ENCODE measurements at regions of chr6 and their contacts with region 1.

Region 1: DNA sequence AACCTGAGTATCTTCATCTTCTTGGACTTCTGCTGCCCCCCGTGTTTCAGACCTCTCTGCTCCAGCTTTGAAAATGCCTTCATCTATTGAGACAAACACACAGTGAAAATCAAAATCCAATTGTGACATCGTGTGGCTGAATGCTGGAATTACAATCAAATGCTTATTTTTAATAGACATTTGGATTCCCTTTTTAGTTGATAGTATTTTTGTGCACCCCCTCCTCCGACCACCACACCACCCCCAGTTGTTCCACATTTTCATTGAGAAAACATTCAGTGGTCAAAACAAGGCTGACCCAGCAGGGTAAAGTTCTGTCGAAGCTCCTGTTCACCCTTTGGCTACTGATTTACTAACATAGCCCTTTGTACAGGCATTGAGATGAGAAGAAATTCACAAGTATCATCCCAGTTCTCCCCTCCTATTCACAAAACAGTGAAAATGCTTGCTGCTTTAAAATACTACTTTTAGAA is 79.0 kb downstream of the NRSN1 start:
- DNase-seq: no peak
- H3K4me3 ChIP-seq: no peak overlapping the region
- H3K27ac ChIP-seq: no peak overlapping the region
- H3K4me1 ChIP-seq: no peaks in the 10 kb centered on the region
- H3K27me3 ChIP-seq: no peaks in the 10 kb centered on the region
- CTCF ChIP-seq: peak in 2 of 3 experiments; percentile 52 to 59; a peak in 2 of 4 replicates
- EP300 ChIP-seq: no peak
- POLR2A ChIP-seq: no peak
- RAD21 ChIP-seq: peak; percentile 86 to 90

Region 2: DNA sequence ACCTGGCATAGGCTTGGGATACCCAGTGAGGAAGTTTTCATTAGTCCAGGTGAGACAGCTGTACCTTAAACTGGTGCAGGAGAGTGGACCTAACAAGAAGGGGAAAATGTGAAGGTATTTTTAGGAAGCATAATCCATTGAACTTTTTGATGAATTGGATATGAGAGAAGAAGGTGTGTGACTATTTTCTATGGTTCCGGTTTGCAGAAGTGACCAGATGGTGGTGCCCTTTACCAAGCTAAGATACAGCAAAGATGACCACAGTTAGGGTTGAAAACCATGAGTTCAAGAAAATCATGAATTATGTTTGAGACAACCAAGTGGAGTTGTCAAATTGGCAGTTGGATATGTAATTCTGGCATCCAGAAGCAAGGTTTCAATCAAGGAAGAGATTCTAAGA is 141.0 kb before region 1 on chr6:
- CTCF ChIA-PET with region 1: interaction called, 30 read pairs
- POLR2A ChIA-PET with region 1: interaction called, 3 read pairs
- DNase-seq: no peak
- H3K4me3 ChIP-seq: no peak overlapping the region
- H3K27ac ChIP-seq: no peak overlapping the region
- H3K4me1 ChIP-seq: no peaks in the 10 kb centered on the region
- H3K27me3 ChIP-seq: no peaks in the 10 kb centered on the region
- CTCF ChIP-seq: peak in 2 of 3 experiments; percentile 73 to 76; a peak in 3 of 4 replicates
- EP300 ChIP-seq: no peak
- POLR2A ChIP-seq: no peak
- RAD21 ChIP-seq: peak; percentile 93 to 96

Region 3: DNA sequence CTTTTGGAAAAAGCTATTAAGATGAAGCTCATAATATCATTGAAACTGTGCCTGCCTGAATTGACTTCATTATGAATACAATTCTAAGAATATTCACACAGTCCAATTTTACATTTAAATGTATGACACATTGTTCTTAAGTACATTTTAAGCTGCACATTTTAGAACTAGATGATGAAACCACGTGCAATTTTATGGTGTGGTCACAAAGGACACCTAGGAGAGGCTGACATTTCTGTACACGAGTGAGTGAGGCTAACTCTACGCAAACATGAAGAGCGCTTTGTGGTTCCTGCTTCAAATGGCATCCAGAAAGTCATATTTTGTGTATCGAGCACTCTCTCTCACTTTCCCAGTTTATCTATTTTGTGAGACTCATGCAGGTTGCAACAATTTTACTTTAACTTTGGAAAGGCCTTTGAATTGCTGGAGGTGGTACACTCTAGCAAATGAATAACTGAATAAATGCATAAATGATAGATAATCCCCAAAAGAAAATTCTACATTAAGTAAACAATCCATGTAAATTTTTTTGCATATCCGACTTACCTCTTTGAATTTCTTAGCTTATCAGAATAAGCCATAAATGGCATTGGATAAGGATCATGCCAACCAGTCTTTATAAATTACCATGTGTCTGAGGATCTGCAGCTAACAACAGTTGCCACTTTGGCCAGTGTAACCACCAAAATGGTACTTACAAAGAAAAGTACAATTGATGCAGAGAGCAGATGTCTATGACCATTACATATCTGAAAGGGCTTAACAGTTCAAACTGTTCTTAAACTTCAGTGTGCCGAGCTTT is 18.3 kb after region 1 on chr6:
- CTCF ChIA-PET with region 1: interaction called, 15 read pairs
- POLR2A ChIA-PET with region 1: no interaction called
- DNase-seq: no peak
- H3K4me3 ChIP-seq: no peak overlapping the region
- H3K27ac ChIP-seq: no peak overlapping the region
- H3K4me1 ChIP-seq: no peaks in the 10 kb centered on the region; a peak in 2 of 7 replicates
- H3K27me3 ChIP-seq: no peaks in the 10 kb centered on the region
- CTCF ChIP-seq: no peak
- EP300 ChIP-seq: no peak
- POLR2A ChIP-seq: no peak
- RAD21 ChIP-seq: no peak

Measured in H1 (cell line).